Endothelial cell of umbilical vein (primary cell): ENCODE measurements at regions of chr19 and their contacts with region 1.

Region 1: GRCh38 chr19:34082289-34083077 is 89.8 kb upstream of the LSM14A start:
- DNase-seq: no peak
- H3K4me3 ChIP-seq: no peak overlapping the region
- H3K27ac ChIP-seq: no peak overlapping the region
- H3K4me1 ChIP-seq: no peaks in the 10 kb centered on the region
- H3K27me3 ChIP-seq: peaks cover 3 to 4% of the 10 kb centered on the region in 2 experiments
- CTCF ChIP-seq: no peak
- POLR2A ChIP-seq: no peak

Region 2: DNA sequence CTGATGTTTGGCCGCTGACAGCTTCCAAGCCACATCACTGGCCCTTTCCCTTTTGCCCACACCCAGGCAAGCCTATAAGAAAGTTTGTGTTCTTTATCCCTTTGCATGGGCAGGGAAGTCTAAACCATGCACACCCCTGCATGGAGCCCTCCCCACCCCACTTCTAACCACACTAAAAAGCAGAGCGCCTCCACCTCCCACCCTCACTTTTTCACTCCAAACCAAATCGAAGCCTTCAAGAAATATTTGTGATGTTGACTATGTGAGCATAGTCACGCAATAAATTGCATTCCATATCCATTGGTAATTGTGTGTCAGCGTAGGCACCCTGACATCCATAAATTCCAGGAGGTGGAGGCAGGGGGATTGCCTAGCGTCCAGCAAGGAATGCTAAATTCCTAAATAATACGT is 14.6 kb before region 1 on chr19:
- CTCF ChIA-PET with region 1: interaction called, 11 read pairs
- POLR2A ChIA-PET with region 1: no interaction called
- dilution Hi-C with region 1: no loop called
- intact Hi-C with region 1: no loop called
- DNase-seq: no peak
- H3K4me3 ChIP-seq: no peak overlapping the region
- H3K27ac ChIP-seq: no peak overlapping the region
- H3K4me1 ChIP-seq: no peaks in the 10 kb centered on the region
- H3K27me3 ChIP-seq: no peaks in the 10 kb centered on the region
- CTCF ChIP-seq: no peak
- POLR2A ChIP-seq: no peak

Region 3: GRCh38 chr19:34145741-34146202 is 63.3 kb after region 1 on chr19:
- CTCF ChIA-PET with region 1: no interaction called
- POLR2A ChIA-PET with region 1: no interaction called
- dilution Hi-C with region 1: no loop called
- intact Hi-C with region 1: no loop called
- DNase-seq: peak; percentile 65
- H3K4me3 ChIP-seq: no peak overlapping the region
- H3K27ac ChIP-seq: no peak overlapping the region
- H3K4me1 ChIP-seq: no peaks in the 10 kb centered on the region
- H3K27me3 ChIP-seq: no peaks in the 10 kb centered on the region
- CTCF ChIP-seq: peak; percentile 68 to 71
- POLR2A ChIP-seq: no peak